Lower leg skin (tissue), 4 donors: ENCODE measurements at regions of chr1 and their contacts with region 1.

Region 1: DNA sequence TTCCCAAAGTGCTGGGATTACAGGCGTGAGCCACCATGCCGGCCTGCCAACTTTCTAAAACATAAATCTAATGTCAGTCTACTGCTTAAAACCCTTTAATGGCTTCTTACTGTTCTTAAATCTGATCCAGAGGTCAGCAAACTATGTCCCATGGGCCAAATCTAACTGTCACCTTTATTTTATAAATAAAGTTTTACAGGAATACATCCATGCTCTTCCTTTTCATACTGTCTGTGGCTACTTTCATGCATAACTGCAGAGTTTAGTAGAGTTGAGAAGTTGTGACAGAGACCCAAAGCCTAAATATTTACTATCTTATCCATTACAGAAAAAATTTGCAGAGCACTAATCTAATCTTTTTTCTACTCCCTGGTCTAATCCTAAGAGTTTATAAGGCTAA is 3.8 kb downstream of the ERI3 start:
- DNase-seq: no peak
- H3K4me3 ChIP-seq: no peak overlapping the region
- CTCF ChIP-seq: no peak
- POLR2A ChIP-seq: no peak

Region 2: DNA sequence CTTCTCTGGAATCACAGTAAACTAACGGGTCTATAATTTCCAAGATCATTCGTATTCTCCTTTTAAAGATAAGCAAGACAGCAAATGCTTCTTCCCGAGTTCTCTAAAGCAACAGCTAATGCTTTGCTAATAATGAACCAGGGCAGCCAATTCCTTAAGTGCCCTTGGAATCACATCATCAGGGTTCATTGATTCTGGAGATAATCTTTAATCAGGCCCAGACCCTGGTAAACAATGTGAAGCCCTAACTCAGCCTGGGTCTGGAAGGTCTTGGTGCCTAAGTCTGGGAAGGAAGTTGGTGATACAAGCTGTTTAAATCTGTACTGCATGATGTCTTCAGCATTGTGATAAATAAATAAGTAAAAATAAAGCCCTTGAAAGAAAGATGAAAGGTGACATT is 14.6 kb before region 1 on chr1:
- intact Hi-C with region 1: loop called (anchors 2 kb)
- DNase-seq: no peak
- H3K4me3 ChIP-seq: no peak overlapping the region
- CTCF ChIP-seq: no peak
- POLR2A ChIP-seq: no peak